Endothelial cell of umbilical vein (primary cell): ENCODE measurements at regions of chr12 and their contacts with region 1.

Region 1: DNA sequence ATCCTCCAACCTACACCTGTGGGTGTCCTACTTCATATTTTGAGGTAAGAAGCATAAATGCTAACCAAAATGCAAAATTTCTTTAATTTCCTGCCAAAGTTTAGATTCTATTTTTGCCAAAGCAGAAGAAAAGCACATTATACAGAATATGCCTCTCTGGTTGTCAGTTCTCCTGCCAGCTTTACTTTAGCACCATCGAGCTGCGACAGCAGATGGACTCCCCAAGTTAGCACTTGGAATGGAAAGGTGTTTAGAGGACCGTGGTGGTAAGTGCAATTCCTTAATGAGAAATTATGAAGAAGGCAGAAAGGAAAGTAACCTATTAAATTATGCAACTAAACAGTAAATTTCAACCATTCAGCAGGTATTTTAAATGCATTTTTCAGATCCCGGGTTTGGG is 326.6 kb downstream of the RERGL start:
- DNase-seq: no peak
- H3K4me3 ChIP-seq: no peak overlapping the region
- H3K27ac ChIP-seq: no peak overlapping the region
- H3K4me1 ChIP-seq: no peaks in the 10 kb centered on the region
- H3K27me3 ChIP-seq: no peaks in the 10 kb centered on the region
- CTCF ChIP-seq: no peak
- POLR2A ChIP-seq: no peak

Region 2: GRCh38 chr12:17841496-17841895 is 78.1 kb after region 1 on chr12:
- CTCF ChIA-PET with region 1: no interaction called
- POLR2A ChIA-PET with region 1: no interaction called
- dilution Hi-C with region 1: no loop called
- intact Hi-C with region 1: loop called (anchors 5 kb)
- DNase-seq: no peak
- H3K4me3 ChIP-seq: no peak overlapping the region
- H3K27ac ChIP-seq: no peak overlapping the region
- H3K4me1 ChIP-seq: no peaks in the 10 kb centered on the region
- H3K27me3 ChIP-seq: no peaks in the 10 kb centered on the region
- CTCF ChIP-seq: no peak
- POLR2A ChIP-seq: no peak